Calu3 (cell line): ENCODE measurements at regions of chr12 and their contacts with region 1.

Region 1: GRCh38 chr12:8662593-8662992 is at the start of gene MFAP5:
- DNase-seq: no peak
- H3K4me3 Mint-ChIP-seq: no peak within 1 kb of the TSS
- H3K27ac Mint-ChIP-seq: no peak within 1 kb of the TSS
- H3K4me1 Mint-ChIP-seq: no peaks in the 10 kb centered on the region
- H3K27me3 Mint-ChIP-seq: peaks cover 13% of the 10 kb centered on the region
- CTCF ChIP-seq: no peak
- total RNA-seq, gene MFAP5: not detected in 2 replicates

Region 2: GRCh38 chr12:8681041-8681902 is 18.7 kb after region 1 on chr12:
- CTCF ChIA-PET with region 1: interaction called, 10 read pairs
- intact Hi-C with region 1: no loop called
- DNase-seq: peak; percentile 58
- H3K4me3 Mint-ChIP-seq: peak overlapping the region; percentile 71
- H3K27ac Mint-ChIP-seq: peak overlapping the region; percentile 78
- H3K4me1 Mint-ChIP-seq: peaks cover 11% of the 10 kb centered on the region
- H3K27me3 Mint-ChIP-seq: no peaks in the 10 kb centered on the region
- CTCF ChIP-seq: no peak